GM10248 (cell line): ENCODE measurements at regions of chr13 and their contacts with region 1.

Region 1: GRCh38 chr13:49792550-49793324 is at the start of gene KPNA3:
- DNase-seq: peak; percentile 94
- CTCF ChIP-seq: peak; percentile 51

Region 2: DNA sequence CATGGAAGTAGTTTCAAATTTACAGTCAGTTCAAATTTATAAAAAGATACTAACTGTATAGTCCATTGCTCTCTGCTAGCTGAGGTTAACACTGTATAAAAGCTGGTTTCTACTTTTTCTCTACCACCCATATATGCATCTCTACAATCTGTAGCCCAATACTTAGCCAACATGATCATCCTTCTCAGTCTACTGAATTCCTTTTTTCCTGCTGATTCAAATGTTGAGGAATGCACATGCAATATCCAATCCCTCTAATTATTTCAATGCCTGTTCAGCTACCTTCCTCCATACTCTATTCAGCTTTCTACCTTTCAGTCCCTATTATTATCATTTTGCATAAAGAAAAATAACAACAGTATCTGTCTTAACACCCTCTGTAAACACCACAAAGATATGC is 15.9 kb before region 1 on chr13:
- CTCF ChIA-PET with region 1: interaction called, 42 read pairs
- POLR2A ChIA-PET with region 1: interaction called, 4 read pairs
- DNase-seq: no peak
- CTCF ChIP-seq: no peak